ENCODE measurements at regions of chr1 and their contacts with region 1.

Region 1: DNA sequence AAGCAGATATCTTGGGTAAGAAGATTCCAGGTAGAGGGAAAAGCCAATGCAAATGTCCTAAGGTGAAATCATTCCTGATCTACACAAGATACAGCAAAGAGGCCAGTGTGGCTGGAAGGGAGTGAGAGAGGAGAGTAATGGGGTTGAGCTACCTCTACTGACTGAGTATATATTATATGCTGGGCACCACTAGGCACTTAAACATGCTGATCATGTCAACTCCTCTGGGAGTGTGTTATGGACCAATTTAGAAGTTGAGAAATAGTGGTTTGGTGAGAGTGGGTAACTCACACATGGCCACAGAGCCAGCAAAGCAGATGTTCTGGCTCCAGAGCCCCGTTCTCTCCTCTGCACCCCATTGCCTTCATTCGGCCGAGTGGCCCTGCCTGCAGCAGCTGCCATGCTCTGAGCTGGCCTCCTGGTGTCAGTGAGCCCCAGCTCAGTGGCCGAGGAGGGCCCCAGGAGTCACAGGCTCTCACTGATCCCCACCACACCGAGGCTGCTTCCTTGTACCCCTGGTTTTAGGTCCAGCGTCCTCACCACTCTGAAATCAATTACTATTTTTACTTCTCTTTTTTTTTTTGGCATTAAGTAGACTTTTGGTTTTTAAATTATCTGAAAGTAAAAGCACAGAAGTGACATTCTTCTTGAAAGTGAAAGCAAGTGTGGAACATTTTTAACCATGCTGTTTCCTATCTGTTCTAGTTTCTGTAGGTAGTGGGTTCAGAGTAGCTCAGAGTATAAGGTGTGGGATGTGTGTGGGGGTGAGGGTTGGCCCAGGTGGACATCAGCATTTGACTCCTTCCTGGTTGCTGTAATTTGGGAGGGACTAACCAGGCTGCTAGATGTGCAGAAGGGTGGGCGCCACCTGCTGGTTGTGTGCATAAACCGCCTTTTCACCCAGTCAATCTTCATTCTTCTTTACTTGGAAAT is 45.8 kb upstream of the CRNN start:
- DNase-seq: peak; percentile 84
- ATAC-seq: peak; percentile 86
- H3K4me3 Mint-ChIP-seq: peak overlapping the region; percentile 57
- H3K27ac Mint-ChIP-seq: peak overlapping the region; percentile 79
- H3K4me1 Mint-ChIP-seq: peaks cover 27% of the 10 kb centered on the region
- H3K27me3 Mint-ChIP-seq: peaks cover 17% of the 10 kb centered on the region

Region 2: GRCh38 chr1:152034646-152035405 is 425.0 kb before region 1 on chr1:
- CTCF ChIA-PET with region 1: interaction called, 20 read pairs
- DNase-seq: peak; percentile 83
- ATAC-seq: peak; percentile 72
- H3K4me3 Mint-ChIP-seq: peak overlapping the region; percentile 96
- H3K27ac Mint-ChIP-seq: peak overlapping the region; percentile 94
- H3K4me1 Mint-ChIP-seq: peaks cover 40% of the 10 kb centered on the region
- H3K27me3 Mint-ChIP-seq: no peaks in the 10 kb centered on the region

Region 3: DNA sequence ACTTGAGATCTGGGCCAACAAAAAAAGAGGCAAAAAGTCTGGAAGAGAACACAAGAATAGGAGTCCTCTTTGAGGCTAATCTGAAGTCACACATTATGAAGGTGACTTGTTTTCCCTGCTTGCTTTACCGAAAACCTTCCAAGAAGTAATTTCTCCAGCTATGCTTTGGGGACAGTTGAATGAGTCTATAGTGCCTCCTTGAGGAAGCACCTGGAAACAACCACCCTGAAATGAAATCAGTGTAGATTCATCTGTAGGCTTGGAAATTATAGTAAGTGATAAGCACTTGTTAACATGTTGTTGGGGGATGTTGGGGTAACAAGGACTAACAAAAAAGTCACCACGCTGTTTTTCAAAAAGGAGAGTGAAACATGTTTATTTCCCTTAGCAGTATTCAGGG is 277.4 kb before region 1 on chr1:
- CTCF ChIA-PET with region 1: interaction called, 164 read pairs
- DNase-seq: no peak
- ATAC-seq: no peak
- H3K4me3 Mint-ChIP-seq: no peak overlapping the region
- H3K27ac Mint-ChIP-seq: no peak overlapping the region
- H3K4me1 Mint-ChIP-seq: peaks cover 8% of the 10 kb centered on the region
- H3K27me3 Mint-ChIP-seq: peaks cover 13% of the 10 kb centered on the region

Region 4: DNA sequence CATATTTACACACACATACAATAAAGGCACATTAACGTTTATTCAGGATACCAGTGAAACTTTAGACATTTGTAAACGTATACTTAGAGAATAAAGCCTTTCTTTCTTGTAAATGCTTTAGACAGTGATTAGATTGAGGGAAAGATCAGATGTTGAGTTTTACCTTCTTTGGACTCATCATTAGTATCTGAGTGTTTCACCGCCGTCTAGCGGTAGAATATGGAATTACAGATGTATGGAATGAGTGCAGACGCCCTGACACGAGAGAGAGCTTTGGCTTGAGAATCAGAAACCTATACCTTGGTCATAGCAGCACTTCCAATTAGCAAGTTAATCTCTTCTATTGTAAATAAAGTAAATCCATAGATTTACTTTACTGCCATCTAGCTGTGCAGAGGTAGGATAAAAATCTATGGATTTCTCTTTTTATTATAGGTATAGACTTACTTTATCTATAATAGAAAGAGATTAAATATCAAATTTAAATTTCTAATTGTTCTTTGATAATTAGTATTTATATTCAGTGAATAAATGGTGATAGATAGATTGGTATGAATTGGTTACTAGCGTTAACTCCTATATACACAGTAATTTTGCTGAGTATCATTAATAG is 112.6 kb before region 1 on chr1:
- CTCF ChIA-PET with region 1: interaction called, 42 read pairs
- DNase-seq: peak; percentile 64
- ATAC-seq: peak; percentile 45
- H3K4me3 Mint-ChIP-seq: no peak overlapping the region
- H3K27ac Mint-ChIP-seq: no peak overlapping the region
- H3K4me1 Mint-ChIP-seq: no peaks in the 10 kb centered on the region
- H3K27me3 Mint-ChIP-seq: peaks cover 23% of the 10 kb centered on the region

Region 5: DNA sequence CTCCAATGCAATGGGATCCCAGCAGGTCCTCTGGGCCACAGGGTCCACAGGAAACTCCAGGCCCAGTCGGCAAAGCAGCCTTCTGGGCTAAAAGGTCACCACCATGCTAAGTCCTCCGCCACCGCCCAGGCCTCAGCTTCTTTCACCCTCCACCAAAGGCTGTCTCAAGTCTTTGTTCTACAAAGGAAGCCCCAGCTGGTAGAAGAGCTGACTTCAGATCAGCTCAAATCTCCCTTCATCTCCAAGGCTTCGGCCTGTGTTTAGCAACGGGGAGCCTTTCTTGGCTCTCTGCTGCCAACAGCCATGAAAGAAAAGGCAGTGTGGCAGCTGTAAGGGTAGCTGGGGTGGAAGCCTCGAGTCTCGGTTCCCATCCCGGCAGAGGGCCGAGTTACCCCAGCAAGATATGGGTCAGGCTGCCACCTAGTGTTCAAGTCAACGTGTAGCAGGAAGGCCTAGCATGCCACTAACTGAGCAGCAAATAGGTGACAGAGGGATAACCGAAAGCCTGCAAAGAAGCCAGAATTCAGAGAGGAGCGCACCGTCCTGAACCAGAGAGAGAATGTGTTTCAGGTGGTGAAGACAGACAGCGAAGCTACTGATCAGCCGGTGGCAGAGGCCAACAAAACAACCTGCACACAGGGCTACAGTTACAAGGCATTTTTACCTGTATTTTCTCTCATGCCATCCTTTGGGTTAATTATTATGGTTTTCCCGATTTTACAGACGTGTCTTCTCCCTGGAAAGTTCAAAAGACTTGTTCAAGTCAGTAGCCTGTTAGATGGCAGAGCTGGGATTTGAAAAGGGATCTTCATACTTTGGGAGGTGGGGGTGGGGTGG is 19.0 kb before region 1 on chr1:
- CTCF ChIA-PET with region 1: interaction called, 53 read pairs
- DNase-seq: peak; percentile 79
- ATAC-seq: peak; percentile 97
- H3K4me3 Mint-ChIP-seq: no peak overlapping the region
- H3K27ac Mint-ChIP-seq: no peak overlapping the region
- H3K4me1 Mint-ChIP-seq: no peaks in the 10 kb centered on the region
- H3K27me3 Mint-ChIP-seq: peaks cover 15% of the 10 kb centered on the region

Region 6: DNA sequence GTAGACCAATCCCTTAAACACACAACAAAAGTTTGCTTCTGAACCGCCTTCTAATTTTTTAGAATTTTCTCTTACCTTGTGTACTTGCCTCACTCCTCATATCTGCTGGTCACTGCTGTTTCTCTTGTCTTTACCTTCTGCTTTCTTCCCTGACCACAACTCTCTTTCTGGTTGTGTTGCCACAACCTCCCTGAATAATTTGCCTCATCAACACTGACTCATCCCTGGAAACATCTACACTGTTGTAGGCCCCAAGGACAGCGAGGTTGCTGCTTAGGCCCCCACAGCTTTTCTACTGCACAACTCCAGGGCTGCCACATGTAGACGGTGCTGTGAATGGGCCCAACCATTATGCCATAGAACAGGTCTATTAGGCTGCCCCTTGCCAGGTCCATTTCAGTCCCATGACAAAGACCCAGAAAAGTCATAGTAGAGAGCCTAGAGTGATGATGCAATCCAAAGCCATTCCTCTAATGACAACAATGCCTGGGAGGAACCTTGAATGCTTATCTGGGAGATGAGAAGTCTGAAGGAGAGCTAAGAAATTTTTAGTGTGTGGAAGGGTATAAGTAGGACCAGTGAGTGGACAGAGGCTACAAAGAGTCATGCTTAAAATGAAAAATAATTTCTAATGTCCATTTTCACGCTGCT is 14.2 kb after region 1 on chr1:
- CTCF ChIA-PET with region 1: interaction called, 11 read pairs
- DNase-seq: no peak
- ATAC-seq: no peak
- H3K4me3 Mint-ChIP-seq: no peak overlapping the region
- H3K27ac Mint-ChIP-seq: no peak overlapping the region
- H3K4me1 Mint-ChIP-seq: no peaks in the 10 kb centered on the region
- H3K27me3 Mint-ChIP-seq: peaks cover 4% of the 10 kb centered on the region

Region 7: GRCh38 chr1:152679459-152679858 is 219.6 kb after region 1 on chr1:
- CTCF ChIA-PET with region 1: no interaction called
- DNase-seq: no peak
- ATAC-seq: no peak
- H3K4me3 Mint-ChIP-seq: no peak overlapping the region
- H3K27ac Mint-ChIP-seq: no peak overlapping the region
- H3K4me1 Mint-ChIP-seq: no peaks in the 10 kb centered on the region
- H3K27me3 Mint-ChIP-seq: peaks cover 24% of the 10 kb centered on the region

Measured in activated CD8-positive, alpha-beta memory T cell treated with anti-CD3 and anti-CD28 coated beads, Interleukin-2, amount 10 ng/mL, durations not matched to agents 7 days and 5 days (primary cell).